Posterior vena cava (tissue), 2 donors: ENCODE measurements at regions of chr18 and their contacts with region 1.

Region 1: GRCh38 chr18:31707815-31708214 is 23.4 kb upstream of the B4GALT6 start:
- DNase-seq: no peak

Region 2: GRCh38 chr18:31156821-31157777 is 550.7 kb before region 1 on chr18:
- intact Hi-C with region 1: no loop called
- DNase-seq: no peak

Region 3: DNA sequence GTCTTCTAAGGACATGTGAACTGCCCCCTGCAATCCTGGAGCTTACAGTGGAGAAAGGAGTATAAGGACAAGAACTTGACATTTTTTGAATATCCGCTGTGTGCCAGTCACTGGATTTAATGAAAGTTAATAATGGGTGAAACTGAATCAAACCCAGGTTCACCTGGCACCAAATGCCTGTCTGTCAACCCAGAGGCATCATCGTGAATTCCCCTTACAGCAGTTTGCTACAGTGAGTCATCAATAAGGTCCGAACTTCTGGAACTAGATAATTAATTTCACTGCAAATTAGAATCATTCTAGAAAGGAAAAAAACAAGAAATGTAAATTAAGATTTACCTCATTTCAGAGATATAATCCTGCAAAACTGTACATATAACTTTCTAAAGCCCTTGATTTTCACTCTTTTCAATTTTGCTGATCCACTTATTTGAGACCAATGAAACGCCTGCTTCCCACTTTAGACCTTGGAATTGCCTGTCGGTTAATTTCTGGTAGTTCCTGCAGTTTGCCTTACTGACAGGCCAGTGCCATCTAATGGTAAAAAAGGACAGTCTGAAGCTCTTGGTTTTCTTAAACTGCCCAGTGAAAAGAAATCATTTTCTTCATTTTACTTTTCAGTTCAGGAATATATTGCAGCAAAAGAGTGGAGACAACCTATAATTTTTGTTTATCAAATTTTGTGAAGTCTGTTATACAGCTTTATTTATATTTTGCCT is 201.6 kb before region 1 on chr18:
- intact Hi-C with region 1: no loop called
- DNase-seq: no peak

Region 4: GRCh38 chr18:31657823-31658669 is 49.8 kb before region 1 on chr18:
- intact Hi-C with region 1: loop called in 1 of 2 experiments (anchors 2 kb)
- DNase-seq: no peak

Region 5: DNA sequence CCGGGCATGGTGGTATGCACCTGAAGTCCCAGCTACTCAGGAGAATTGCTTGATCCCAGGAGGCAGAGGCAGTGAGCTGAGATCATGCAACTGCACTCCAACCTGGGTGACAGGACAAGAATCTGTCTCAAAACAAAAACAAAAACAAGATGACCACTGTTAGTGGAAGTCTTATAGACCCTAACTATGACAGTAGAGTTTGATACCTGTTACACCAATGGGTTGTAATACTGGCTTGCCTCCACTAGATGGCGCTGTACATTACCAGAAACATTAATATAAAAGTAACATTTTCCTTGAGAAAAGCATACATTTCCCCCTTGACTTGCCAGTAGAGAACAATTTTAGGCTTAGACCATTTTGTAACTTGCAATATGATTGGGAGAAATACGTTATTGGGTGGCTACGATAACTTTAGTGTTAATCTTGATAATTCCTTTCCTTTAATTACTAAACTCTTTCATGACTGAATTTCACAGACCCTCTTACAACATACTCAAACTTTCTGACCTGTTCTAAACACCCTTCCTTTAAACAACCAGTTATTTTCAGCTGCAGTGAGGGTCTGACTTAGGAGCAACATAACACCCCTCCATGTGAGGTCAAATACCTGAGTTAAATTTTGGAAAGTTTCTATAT is 33.4 kb after region 1 on chr18:
- intact Hi-C with region 1: no loop called
- DNase-seq: no peak

Region 6: GRCh38 chr18:31774477-31774785 is 66.6 kb after region 1 on chr18:
- intact Hi-C with region 1: no loop called
- DNase-seq: no peak